K562 (cell line): ENCODE measurements at regions of chr11 and their contacts with region 1.

Region 1: DNA sequence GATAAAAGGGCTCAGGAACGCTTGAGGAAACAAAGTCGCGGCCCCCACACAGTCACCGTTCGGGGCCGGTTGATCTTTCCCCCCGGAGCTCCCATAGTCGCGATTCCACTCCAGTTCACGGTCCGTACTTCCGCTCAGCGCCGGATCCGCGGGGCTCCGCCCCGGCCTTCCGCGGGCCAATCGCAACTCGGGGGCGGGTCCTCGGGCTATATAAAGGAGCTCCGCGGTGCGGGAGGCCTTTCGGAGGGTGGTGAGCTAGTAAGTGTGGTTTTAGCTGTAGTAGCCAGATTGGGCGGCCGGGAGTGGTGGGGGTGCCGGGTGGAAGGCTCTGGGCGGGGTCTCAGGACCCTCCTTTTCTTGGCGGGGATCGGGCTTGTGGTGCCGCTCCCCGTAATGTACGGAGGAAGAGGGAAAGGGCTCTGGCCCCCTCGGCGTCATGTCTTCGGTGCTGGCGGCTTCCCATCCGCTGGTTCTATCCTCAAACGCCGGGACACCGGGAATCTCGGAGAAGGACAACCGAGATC is at the starts of genes C11orf98 and CSKMT:
- DNase-seq: peak; percentile 91 to 97 (median 94)
- ATAC-seq: peak; percentile 87
- H3K4me3 ChIP-seq: peak within 1 kb of the TSS; percentile 73
- H3K27ac ChIP-seq: peak within 1 kb of the TSS; percentile 80
- H3K4me1 ChIP-seq: peaks cover 19 to 41% of the 10 kb centered on the region in 2 experiments; a peak in 4 of 5 replicates
- H3K27me3 ChIP-seq: no peaks in the 10 kb centered on the region
- CTCF ChIP-seq: no peak
- EP300 ChIP-seq: no peak
- POLR2A ChIP-seq: peak; percentile 100
- RAD21 ChIP-seq: peak in 1 of 2 experiments; percentile 8; a peak in 1 of 4 replicates
- polyA plus RNA-seq, gene C11orf98: 164 to 246 TPM
- polyA plus RNA-seq, gene CSKMT: 26.4 to 31.8 TPM

Region 2: GRCh38 chr11:62591448-62592145 is 73.5 kb before region 1 on chr11 and contains the start of gene TUT1:
- CTCF ChIA-PET with region 1: no interaction called
- POLR2A ChIA-PET with region 1: interaction called, 35 read pairs
- in situ Hi-C with region 1: no loop called
- intact Hi-C with region 1: no loop called
- DNase-seq: peak; percentile 81 to 99 (median 86)
- ATAC-seq: peak; percentile 91
- H3K4me3 ChIP-seq: peak within 1 kb of the TSS; percentile 63
- H3K27ac ChIP-seq: peak within 1 kb of the TSS; percentile 90
- H3K4me1 ChIP-seq: peaks cover 24 to 25% of the 10 kb centered on the region in 2 experiments
- H3K27me3 ChIP-seq: no peaks in the 10 kb centered on the region
- CTCF ChIP-seq: peak; percentile 1 to 6 (median 1); a peak in 1 of 6 replicates
- EP300 ChIP-seq: peak; percentile 79
- POLR2A ChIP-seq: peak; percentile 98
- RAD21 ChIP-seq: peak in 1 of 2 experiments; percentile 2; a peak in 1 of 4 replicates
- polyA plus RNA-seq, gene TUT1: 0.66 to 1.5 TPM

Region 3: GRCh38 chr11:62645956-62646824 is 18.9 kb before region 1 on chr11 and contains the start of gene GANAB:
- CTCF ChIA-PET with region 1: no interaction called
- POLR2A ChIA-PET with region 1: interaction called, 83 read pairs
- in situ Hi-C with region 1: no loop called
- intact Hi-C with region 1: loop called (anchors 2 kb)
- DNase-seq: peak; percentile 97 to 100 (median 98)
- ATAC-seq: peak; percentile 98
- H3K4me3 ChIP-seq: peak within 1 kb of the TSS; percentile 97
- H3K27ac ChIP-seq: peak within 1 kb of the TSS; percentile 96
- H3K4me1 ChIP-seq: peaks cover 12 to 38% of the 10 kb centered on the region in 2 experiments
- H3K27me3 ChIP-seq: no peaks in the 10 kb centered on the region
- CTCF ChIP-seq: no peak
- EP300 ChIP-seq: peak; percentile 12; the same call in 1 of the 2 replicates
- POLR2A ChIP-seq: peak; percentile 94
- RAD21 ChIP-seq: no peak
- polyA plus RNA-seq, gene GANAB: 6.5 to 17.9 TPM

Region 4: GRCh38 chr11:62689421-62690183 is 24.5 kb after region 1 on chr11 and contains the start of gene LRRN4CL:
- CTCF ChIA-PET with region 1: no interaction called
- POLR2A ChIA-PET with region 1: interaction called, 12 read pairs
- in situ Hi-C with region 1: no loop called
- intact Hi-C with region 1: no loop called
- DNase-seq: no peak
- ATAC-seq: peak; percentile 69
- H3K4me3 ChIP-seq: no peak within 1 kb of the TSS
- H3K27ac ChIP-seq: no peak within 1 kb of the TSS
- H3K4me1 ChIP-seq: peaks cover 0 to 10% of the 10 kb centered on the region in 2 experiments; a peak in 3 of 5 replicates
- H3K27me3 ChIP-seq: no peaks in the 10 kb centered on the region
- CTCF ChIP-seq: no peak
- EP300 ChIP-seq: no peak
- POLR2A ChIP-seq: peak; percentile 52
- RAD21 ChIP-seq: no peak
- polyA plus RNA-seq, gene LRRN4CL: not detected

Region 5: DNA sequence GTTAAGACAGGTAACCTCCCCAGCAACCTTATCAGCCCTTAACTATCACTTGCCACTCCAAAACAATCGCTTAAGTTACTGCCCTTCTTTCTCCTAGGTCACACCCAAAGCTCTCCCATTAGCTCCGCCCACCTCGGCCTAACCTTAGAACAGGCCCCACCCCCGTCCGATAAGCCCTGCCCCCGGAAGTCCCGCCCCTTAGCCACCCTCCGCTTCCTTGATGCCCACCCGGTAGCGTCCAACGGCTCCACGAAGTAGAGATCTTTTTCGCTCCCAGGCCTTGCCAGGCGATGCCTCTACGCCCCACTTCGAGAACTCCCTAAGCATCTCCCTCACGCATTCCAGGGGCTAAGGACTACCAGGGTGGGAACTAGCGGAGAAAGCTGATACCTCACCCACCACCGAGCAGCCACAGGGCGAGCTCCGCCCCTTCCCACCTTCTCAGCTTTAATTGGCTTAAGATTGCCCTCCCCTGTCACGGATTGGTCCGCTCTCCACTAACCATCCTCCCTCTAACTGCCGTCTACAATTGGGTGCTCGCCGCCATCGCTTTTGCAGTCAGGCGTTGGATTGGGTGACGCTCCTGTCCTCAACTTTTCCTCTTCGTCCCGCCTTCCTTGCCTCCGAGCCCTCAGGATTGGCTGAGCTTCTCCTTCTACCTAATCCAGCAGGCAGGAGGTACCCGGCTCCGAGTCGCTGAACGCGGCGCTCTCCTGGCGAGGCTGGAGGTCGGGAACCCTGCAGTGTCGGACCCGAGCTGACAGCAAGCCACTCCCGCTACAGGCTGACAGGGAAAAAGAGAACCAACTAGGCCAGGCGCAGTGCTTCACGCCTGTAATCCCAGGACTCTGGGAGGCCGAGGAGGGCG is 88.8 kb after region 1 on chr11 and contains the start of gene ZBTB3:
- CTCF ChIA-PET with region 1: no interaction called
- POLR2A ChIA-PET with region 1: interaction called, 15 read pairs
- in situ Hi-C with region 1: no loop called
- intact Hi-C with region 1: no loop called
- DNase-seq: peak; percentile 95 to 99 (median 96)
- ATAC-seq: peak; percentile 98
- H3K4me3 ChIP-seq: peak within 1 kb of the TSS; percentile 63
- H3K27ac ChIP-seq: peak within 1 kb of the TSS; percentile 86
- H3K4me1 ChIP-seq: peaks cover 14 to 28% of the 10 kb centered on the region in 2 experiments; a peak in 4 of 5 replicates
- H3K27me3 ChIP-seq: no peaks in the 10 kb centered on the region
- CTCF ChIP-seq: peak in 1 of 3 experiments; percentile 1; a peak in 1 of 6 replicates
- EP300 ChIP-seq: no peak
- POLR2A ChIP-seq: peak; percentile 98
- RAD21 ChIP-seq: no peak
- polyA plus RNA-seq, gene ZBTB3: 1.9 to 3.0 TPM

Region 6: GRCh38 chr11:62831520-62832335 is 166.6 kb after region 1 on chr11 and contains the start of gene STX5:
- CTCF ChIA-PET with region 1: no interaction called
- POLR2A ChIA-PET with region 1: no interaction called
- in situ Hi-C with region 1: no loop called
- intact Hi-C with region 1: no loop called
- DNase-seq: peak; percentile 94 to 99 (median 96)
- ATAC-seq: peak; percentile 94
- H3K4me3 ChIP-seq: peak within 1 kb of the TSS; percentile 94
- H3K27ac ChIP-seq: peak within 1 kb of the TSS; percentile 98
- H3K4me1 ChIP-seq: peaks cover 7 to 17% of the 10 kb centered on the region in 2 experiments; a peak in 4 of 5 replicates
- H3K27me3 ChIP-seq: no peaks in the 10 kb centered on the region
- CTCF ChIP-seq: no peak
- EP300 ChIP-seq: no peak
- POLR2A ChIP-seq: peak; percentile 92
- RAD21 ChIP-seq: no peak
- polyA plus RNA-seq, gene STX5: 2.8 to 3.6 TPM